CD4-positive, alpha-beta T cell (primary cell): ENCODE measurements at regions of chr12 and their contacts with region 1.

Region 1: GRCh38 chr12:132887513-132888351 is at the start of gene CHFR:
- DNase-seq: peak; percentile 87 to 98 (median 92)
- ATAC-seq: peak; percentile 97
- H3K4me3 ChIP-seq: peak within 1 kb of the TSS; percentile 77
- H3K4me3 Mint-ChIP-seq: peak within 1 kb of the TSS; percentile 97
- H3K27ac ChIP-seq: peak within 1 kb of the TSS; percentile 97
- H3K27ac Mint-ChIP-seq: peak within 1 kb of the TSS; percentile 100
- H3K4me1 ChIP-seq: peaks cover 22% of the 10 kb centered on the region
- H3K4me1 Mint-ChIP-seq: peaks cover 34% of the 10 kb centered on the region
- H3K27me3 ChIP-seq: no peaks in the 10 kb centered on the region
- H3K27me3 Mint-ChIP-seq: no peaks in the 10 kb centered on the region
- CTCF ChIP-seq: no peak
- total RNA-seq, gene CHFR: 75.1 to 85.6 TPM

Region 2: DNA sequence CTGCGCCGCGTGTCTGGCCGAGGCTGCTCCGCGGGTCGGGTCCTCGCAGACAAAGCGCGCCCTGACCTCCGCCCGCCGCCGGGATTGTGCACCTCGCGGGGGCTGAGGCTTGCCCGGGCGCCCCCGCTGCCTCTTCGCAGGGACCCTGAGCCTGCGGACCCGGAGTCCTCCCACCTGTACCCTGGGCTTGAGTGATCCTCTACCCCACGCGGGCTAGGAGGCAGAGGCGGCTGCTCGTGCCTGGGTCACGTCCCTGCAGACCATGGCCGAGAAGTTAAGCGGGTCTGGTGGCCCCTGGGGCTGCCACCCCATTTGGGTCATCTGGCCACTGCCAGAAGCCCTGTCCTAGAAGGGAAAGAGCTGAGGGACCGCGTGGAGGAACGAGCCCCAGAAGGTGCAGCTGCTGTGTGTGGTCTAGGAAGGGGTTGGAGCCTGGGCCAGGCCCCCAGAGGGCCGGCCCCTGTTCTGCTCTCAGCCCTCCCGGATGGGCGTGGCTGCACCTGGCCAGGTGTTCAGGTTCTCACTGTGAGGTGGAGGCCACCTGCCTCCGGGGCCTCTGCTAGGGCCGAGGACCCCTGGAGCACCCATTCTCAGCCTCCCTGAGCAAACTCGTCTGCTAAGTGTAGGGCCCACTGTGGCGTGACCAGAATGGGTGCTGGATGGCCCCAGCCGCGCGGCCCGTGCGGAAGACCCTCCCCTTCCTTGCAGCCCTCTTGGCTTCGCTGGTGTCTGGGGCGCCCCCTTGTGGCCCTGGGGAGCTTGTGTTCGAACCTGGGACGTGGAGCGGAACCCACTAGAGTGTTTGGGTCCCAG is 326.9 kb before region 1 on chr12:
- CTCF ChIA-PET with region 1: no interaction called
- POLR2A ChIA-PET with region 1: no interaction called
- intact Hi-C with region 1: no loop called
- DNase-seq: peak; percentile 56 to 82 (median 66)
- ATAC-seq: peak; percentile 60
- H3K4me3 ChIP-seq: peak overlapping the region; percentile 41
- H3K4me3 Mint-ChIP-seq: peak overlapping the region; percentile 67
- H3K27ac ChIP-seq: no peak overlapping the region
- H3K27ac Mint-ChIP-seq: no peak overlapping the region
- H3K4me1 ChIP-seq: peaks cover 29% of the 10 kb centered on the region
- H3K4me1 Mint-ChIP-seq: peaks cover 22% of the 10 kb centered on the region
- H3K27me3 ChIP-seq: peaks cover 4 to 8% of the 10 kb centered on the region in 2 experiments
- H3K27me3 Mint-ChIP-seq: peaks cover 14% of the 10 kb centered on the region
- CTCF ChIP-seq: peak; percentile 77

Region 3: DNA sequence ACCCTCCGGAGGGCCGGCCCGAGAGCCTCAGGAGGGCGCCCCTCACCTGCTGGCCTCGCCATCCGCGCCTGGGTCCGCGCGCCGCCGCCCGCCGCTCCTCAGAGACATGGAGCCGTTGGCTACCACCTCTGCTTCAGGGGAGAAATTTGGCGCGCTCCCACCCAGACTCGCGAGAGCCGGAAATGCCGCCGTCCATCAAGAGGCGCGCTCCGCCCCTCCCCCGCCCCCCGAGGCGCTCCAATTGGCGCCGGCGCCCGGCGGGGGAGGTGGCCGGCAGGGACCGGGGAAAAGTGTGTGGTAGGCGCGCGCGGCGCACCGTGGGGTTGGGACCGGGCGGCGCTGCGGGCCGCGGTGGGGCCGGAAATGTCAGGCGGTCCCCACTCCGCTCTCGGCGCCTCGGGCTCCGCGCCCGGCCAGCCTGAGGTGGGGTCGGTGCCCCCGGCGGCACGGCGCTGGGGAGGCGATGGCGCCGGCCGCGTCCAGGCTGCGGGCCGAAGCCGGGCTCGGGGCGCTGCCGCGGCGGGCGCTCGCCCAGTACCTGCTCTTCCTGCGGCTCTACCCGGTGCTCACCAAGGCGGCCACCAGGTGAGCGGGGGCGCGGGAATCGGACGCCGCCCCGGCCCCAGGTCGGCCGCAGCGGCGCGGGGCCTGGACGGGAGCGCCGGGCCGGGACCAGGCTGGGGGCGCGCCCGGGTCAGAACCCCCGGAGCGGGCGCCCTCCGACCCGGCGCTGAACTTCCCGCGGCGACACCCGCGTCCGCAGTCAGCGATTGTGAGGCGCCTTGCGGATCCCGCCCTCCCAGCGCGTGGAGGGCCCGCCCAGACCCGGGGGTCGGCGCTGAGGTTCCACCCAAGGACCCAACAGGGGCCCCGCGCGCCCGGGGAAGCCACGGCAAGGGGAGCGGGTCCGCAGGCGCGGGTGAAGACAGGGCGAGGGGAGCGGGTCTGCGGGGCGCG is 200.2 kb before region 1 on chr12 and contains the starts of genes POLE and PXMP2:
- CTCF ChIA-PET with region 1: no interaction called
- POLR2A ChIA-PET with region 1: no interaction called
- intact Hi-C with region 1: loop called in 1 of 2 experiments (anchors 10 kb)
- DNase-seq: peak; percentile 88 to 97 (median 95)
- ATAC-seq: peak; percentile 94
- H3K4me3 ChIP-seq: peak within 1 kb of the TSS; percentile 48
- H3K4me3 Mint-ChIP-seq: peak within 1 kb of the TSS; percentile 91
- H3K27ac ChIP-seq: no peak within 1 kb of the TSS
- H3K27ac Mint-ChIP-seq: no peak within 1 kb of the TSS
- H3K4me1 ChIP-seq: peaks cover 22% of the 10 kb centered on the region
- H3K4me1 Mint-ChIP-seq: peaks cover 23% of the 10 kb centered on the region
- H3K27me3 ChIP-seq: no peaks in the 10 kb centered on the region
- H3K27me3 Mint-ChIP-seq: no peaks in the 10 kb centered on the region
- CTCF ChIP-seq: no peak
- total RNA-seq, gene POLE: 41.8 to 46.1 TPM
- total RNA-seq, gene PXMP2: 2.1 to 2.6 TPM

Region 4: GRCh38 chr12:132771126-132771838 is 116.5 kb before region 1 on chr12:
- CTCF ChIA-PET with region 1: no interaction called
- POLR2A ChIA-PET with region 1: interaction called, 4 read pairs
- intact Hi-C with region 1: loop called in 1 of 2 experiments (anchors 5 kb)
- DNase-seq: peak; percentile 28 to 86 (median 55)
- ATAC-seq: peak; percentile 88
- H3K4me3 ChIP-seq: peak overlapping the region; percentile 4
- H3K4me3 Mint-ChIP-seq: peak overlapping the region; percentile 82
- H3K27ac ChIP-seq: peak overlapping the region; percentile 60 to 62
- H3K27ac Mint-ChIP-seq: peak overlapping the region; percentile 95
- H3K4me1 ChIP-seq: peaks cover 67% of the 10 kb centered on the region
- H3K4me1 Mint-ChIP-seq: peaks cover 62% of the 10 kb centered on the region
- H3K27me3 ChIP-seq: no peaks in the 10 kb centered on the region
- H3K27me3 Mint-ChIP-seq: no peaks in the 10 kb centered on the region
- CTCF ChIP-seq: no peak

Region 5: GRCh38 chr12:132834181-132834711 is 53.5 kb before region 1 on chr12:
- CTCF ChIA-PET with region 1: no interaction called
- POLR2A ChIA-PET with region 1: interaction called, 30 read pairs
- intact Hi-C with region 1: loop called in 1 of 2 experiments (anchors 1 kb)
- DNase-seq: peak in 10 of 14 experiments; percentile 6 to 64 (median 26)
- ATAC-seq: peak; percentile 78
- H3K4me3 ChIP-seq: no peak overlapping the region
- H3K4me3 Mint-ChIP-seq: peak overlapping the region; percentile 82
- H3K27ac ChIP-seq: peak overlapping the region; percentile 25 to 38
- H3K27ac Mint-ChIP-seq: peak overlapping the region; percentile 96
- H3K4me1 ChIP-seq: peaks cover 42% of the 10 kb centered on the region
- H3K4me1 Mint-ChIP-seq: peaks cover 45% of the 10 kb centered on the region
- H3K27me3 ChIP-seq: no peaks in the 10 kb centered on the region
- H3K27me3 Mint-ChIP-seq: no peaks in the 10 kb centered on the region
- CTCF ChIP-seq: no peak

Region 6: GRCh38 chr12:132872975-132873421 is 14.7 kb before region 1 on chr12:
- CTCF ChIA-PET with region 1: no interaction called
- POLR2A ChIA-PET with region 1: interaction called, 28 read pairs
- intact Hi-C with region 1: no loop called
- DNase-seq: peak in 10 of 14 experiments; percentile 2 to 57 (median 32)
- ATAC-seq: peak; percentile 77
- H3K4me3 ChIP-seq: peak overlapping the region; percentile 10
- H3K4me3 Mint-ChIP-seq: peak overlapping the region; percentile 71
- H3K27ac ChIP-seq: peak overlapping the region in 1 of 2 donors; percentile 57
- H3K27ac Mint-ChIP-seq: peak overlapping the region; percentile 93
- H3K4me1 ChIP-seq: peaks cover 21% of the 10 kb centered on the region
- H3K4me1 Mint-ChIP-seq: peaks cover 36% of the 10 kb centered on the region
- H3K27me3 ChIP-seq: no peaks in the 10 kb centered on the region
- H3K27me3 Mint-ChIP-seq: no peaks in the 10 kb centered on the region
- CTCF ChIP-seq: no peak